ENCODE measurements at regions of chr15 and their contacts with region 1.

Region 1: GRCh38 chr15:70799667-70800450 is 36.5 kb upstream of the UACA start:
- DNase-seq: peak; percentile 83
- H3K4me3 ChIP-seq: no peak overlapping the region
- H3K27ac ChIP-seq: peak overlapping the region; percentile 25
- H3K4me1 ChIP-seq: peaks cover 34% of the 10 kb centered on the region
- H3K27me3 ChIP-seq: no peaks in the 10 kb centered on the region
- CTCF ChIP-seq: no peak

Region 2: GRCh38 chr15:70763120-70763878 is 36.6 kb before region 1 on chr15 and contains the start of gene UACA:
- CTCF ChIA-PET with region 1: interaction called, 13 read pairs
- dilution Hi-C with region 1: loop called (anchors 5 kb)
- in situ Hi-C with region 1: no loop called
- intact Hi-C with region 1: loop called (anchors 2 kb)
- DNase-seq: peak; percentile 98
- H3K4me3 ChIP-seq: peak within 1 kb of the TSS; percentile 74 to 94 (median 91)
- H3K27ac ChIP-seq: peak within 1 kb of the TSS; percentile 82
- H3K4me1 ChIP-seq: peaks cover 13% of the 10 kb centered on the region
- H3K27me3 ChIP-seq: no peaks in the 10 kb centered on the region
- CTCF ChIP-seq: no peak
- total RNA-seq, gene UACA: 19.2 to 39.6 TPM

Region 3: GRCh38 chr15:70853821-70854666 is 54.2 kb after region 1 on chr15 and contains the start of gene LARP6:
- CTCF ChIA-PET with region 1: no interaction called
- dilution Hi-C with region 1: no loop called
- in situ Hi-C with region 1: no loop called
- intact Hi-C with region 1: no loop called
- DNase-seq: peak; percentile 22
- H3K4me3 ChIP-seq: peak within 1 kb of the TSS; percentile 66 to 87 (median 83)
- H3K27ac ChIP-seq: peak within 1 kb of the TSS; percentile 83
- H3K4me1 ChIP-seq: peaks cover 36% of the 10 kb centered on the region
- H3K27me3 ChIP-seq: no peaks in the 10 kb centered on the region
- CTCF ChIP-seq: no peak
- total RNA-seq, gene LARP6: 37.5 to 77.3 TPM

Region 4: DNA sequence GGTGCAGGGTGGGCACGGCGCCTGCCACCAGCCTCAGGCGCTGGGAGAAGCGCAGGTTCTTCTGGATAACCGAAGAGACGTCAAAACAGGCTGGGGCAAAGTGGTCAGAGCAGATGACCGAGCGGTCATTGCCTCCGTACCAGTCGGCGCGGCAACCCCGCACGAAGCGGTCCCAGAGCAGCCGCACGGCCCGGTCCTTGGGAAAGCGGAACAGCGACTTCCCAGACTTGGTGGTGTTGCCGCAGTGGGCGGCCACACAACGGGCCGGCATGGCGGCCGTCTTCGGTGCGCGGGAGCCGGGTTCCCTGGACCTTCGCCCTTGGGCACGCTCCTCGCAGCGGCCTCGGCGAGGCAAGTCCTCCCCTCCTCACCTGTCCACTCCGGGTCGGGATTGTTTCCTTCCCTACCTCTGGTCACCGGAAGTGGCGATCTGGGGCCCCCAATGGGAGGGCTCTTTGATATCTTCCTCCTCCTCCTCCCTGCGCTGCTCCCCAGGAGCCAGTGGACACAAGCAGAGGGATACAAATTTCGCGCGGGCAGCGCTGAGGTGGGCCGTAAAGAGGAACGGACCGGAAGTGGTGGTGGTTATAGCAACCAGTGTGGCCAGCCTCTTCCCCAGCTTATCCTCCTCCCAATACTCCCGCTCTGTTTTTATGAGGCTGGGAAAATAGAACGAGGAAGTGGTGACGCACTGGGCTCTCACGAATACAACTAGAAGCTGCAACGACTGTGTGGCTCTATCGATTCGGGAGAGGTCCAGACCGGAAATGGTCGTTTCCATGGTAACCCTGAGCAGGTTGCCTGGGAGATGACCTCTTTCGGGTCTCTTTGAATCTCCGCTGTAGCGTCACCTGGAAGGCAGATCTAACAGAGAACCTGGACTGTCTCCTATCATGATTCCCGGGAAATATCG is 92.4 kb after region 1 on chr15 and contains the starts of genes LRRC49 and THAP10:
- CTCF ChIA-PET with region 1: no interaction called
- dilution Hi-C with region 1: no loop called
- in situ Hi-C with region 1: no loop called
- intact Hi-C with region 1: no loop called
- DNase-seq: peak; percentile 97
- H3K4me3 ChIP-seq: peak within 1 kb of the TSS; percentile 80 to 88 (median 85)
- H3K27ac ChIP-seq: peak within 1 kb of the TSS; percentile 79
- H3K4me1 ChIP-seq: peaks cover 13% of the 10 kb centered on the region
- H3K27me3 ChIP-seq: no peaks in the 10 kb centered on the region
- CTCF ChIP-seq: peak in 1 of 2 donors; percentile 0
- total RNA-seq, gene LRRC49: 9.0 to 21.2 TPM
- total RNA-seq, gene THAP10: 3.0 to 4.9 TPM